ENCODE measurements at regions of chr9 and their contacts with region 1.

Region 1: GRCh38 chr9:111926421-111926875 is 29.8 kb downstream of the UGCG start:
- DNase-seq: peak; percentile 91
- H3K4me3 ChIP-seq: peak overlapping the region; percentile 38
- H3K27ac ChIP-seq: peak overlapping the region; percentile 80
- H3K4me1 ChIP-seq: peaks cover 68% of the 10 kb centered on the region
- CTCF ChIP-seq: no peak; the same call in 1 of the 2 replicates

Region 2: GRCh38 chr9:111902396-111903147 is 23.9 kb before region 1 on chr9:
- CTCF ChIA-PET with region 1: no interaction called
- POLR2A ChIA-PET with region 1: interaction called, 10 read pairs
- intact Hi-C with region 1: loop called (anchors 2 kb)
- DNase-seq: no peak
- H3K4me3 ChIP-seq: no peak overlapping the region
- H3K27ac ChIP-seq: no peak overlapping the region
- H3K4me1 ChIP-seq: peaks cover 28% of the 10 kb centered on the region
- CTCF ChIP-seq: no peak

Region 3: DNA sequence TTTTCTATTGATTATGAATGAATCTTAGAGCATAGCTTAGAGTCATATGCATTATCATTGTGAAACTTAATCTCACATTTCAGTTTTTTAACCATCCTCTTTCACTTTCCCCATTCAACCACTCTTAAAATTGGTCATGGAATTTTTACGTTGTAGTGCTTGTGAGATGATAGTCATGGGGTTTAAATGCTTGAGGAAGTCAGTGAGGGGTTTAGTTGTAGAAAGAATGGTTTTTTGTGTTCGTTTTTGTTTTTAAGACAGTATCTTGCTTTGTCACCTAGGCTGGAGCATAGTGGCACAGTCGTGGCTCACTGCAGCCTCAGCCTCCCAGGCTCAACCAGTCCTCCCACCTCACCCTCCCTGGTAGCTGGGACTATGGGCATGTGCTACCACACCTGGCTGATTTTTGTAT is 10.2 kb before region 1 on chr9:
- CTCF ChIA-PET with region 1: no interaction called
- POLR2A ChIA-PET with region 1: interaction called, 15 read pairs
- intact Hi-C with region 1: no loop called
- DNase-seq: no peak
- H3K4me3 ChIP-seq: no peak overlapping the region
- H3K27ac ChIP-seq: no peak overlapping the region
- H3K4me1 ChIP-seq: peaks cover 51% of the 10 kb centered on the region
- CTCF ChIP-seq: no peak

Measured in OCI-LY7 (cell line).